ENCODE measurements at regions of chr15 and their contacts with region 1.

Region 1: DNA sequence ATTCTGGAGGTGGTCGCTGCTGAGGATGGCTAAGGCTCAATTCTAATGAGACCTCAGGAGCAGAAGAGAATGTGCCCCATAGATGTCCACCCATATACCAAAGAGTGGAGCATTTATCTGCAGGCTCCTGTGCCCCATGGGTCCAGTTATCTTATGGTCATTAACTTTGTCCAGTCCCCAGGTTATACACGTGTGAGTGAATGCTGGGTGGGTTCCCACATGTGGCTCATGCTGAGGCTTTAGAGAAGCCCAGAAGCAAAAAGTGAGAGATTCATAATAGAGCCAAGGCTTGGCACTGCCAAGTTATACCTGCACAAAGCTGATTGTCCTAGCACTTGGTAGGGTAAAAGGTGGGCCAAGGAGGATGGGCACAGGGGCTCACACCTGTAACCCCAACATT is 30.0 kb upstream of the MINAR1 start:
- DNase-seq: no peak
- ATAC-seq: no peak
- H3K4me3 ChIP-seq: no peak overlapping the region
- H3K27ac ChIP-seq: no peak overlapping the region
- H3K4me1 ChIP-seq: no peaks in the 10 kb centered on the region
- H3K27me3 ChIP-seq: no peaks in the 10 kb centered on the region
- CTCF ChIP-seq: no peak

Region 2: DNA sequence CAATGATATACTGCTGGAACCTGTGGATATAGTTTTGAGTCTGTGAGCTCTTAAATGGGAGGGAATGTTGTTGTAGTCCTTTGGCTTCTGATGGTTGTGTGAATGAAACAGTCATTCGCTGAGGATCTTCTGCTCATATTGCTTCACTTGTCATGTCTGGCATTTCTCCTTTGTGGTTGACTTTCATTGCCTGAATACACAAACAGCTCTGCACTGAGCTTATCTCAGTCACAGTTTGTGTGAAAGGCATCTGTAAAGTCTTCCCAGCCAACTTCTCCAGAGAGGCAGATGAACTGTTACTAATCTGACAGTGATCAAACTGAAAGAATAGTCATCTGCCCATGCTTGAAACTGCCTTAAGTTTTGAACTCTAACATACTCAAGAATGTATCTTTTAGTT is 31.4 kb before region 1 on chr15:
- CTCF ChIA-PET with region 1: no interaction called
- POLR2A ChIA-PET with region 1: no interaction called
- in situ Hi-C with region 1: no loop called
- intact Hi-C with region 1: no loop called
- DNase-seq: no peak
- ATAC-seq: no peak
- H3K4me3 ChIP-seq: no peak overlapping the region
- H3K27ac ChIP-seq: no peak overlapping the region
- H3K4me1 ChIP-seq: no peaks in the 10 kb centered on the region
- H3K27me3 ChIP-seq: no peaks in the 10 kb centered on the region
- CTCF ChIP-seq: no peak

Region 3: GRCh38 chr15:79442911-79443310 is 40.8 kb after region 1 on chr15:
- CTCF ChIA-PET with region 1: no interaction called
- POLR2A ChIA-PET with region 1: interaction called, 10 read pairs
- in situ Hi-C with region 1: no loop called
- intact Hi-C with region 1: no loop called
- DNase-seq: no peak
- ATAC-seq: no peak
- H3K4me3 ChIP-seq: no peak overlapping the region
- H3K27ac ChIP-seq: no peak overlapping the region
- H3K4me1 ChIP-seq: no peaks in the 10 kb centered on the region
- H3K27me3 ChIP-seq: no peaks in the 10 kb centered on the region
- CTCF ChIP-seq: no peak

Region 4: DNA sequence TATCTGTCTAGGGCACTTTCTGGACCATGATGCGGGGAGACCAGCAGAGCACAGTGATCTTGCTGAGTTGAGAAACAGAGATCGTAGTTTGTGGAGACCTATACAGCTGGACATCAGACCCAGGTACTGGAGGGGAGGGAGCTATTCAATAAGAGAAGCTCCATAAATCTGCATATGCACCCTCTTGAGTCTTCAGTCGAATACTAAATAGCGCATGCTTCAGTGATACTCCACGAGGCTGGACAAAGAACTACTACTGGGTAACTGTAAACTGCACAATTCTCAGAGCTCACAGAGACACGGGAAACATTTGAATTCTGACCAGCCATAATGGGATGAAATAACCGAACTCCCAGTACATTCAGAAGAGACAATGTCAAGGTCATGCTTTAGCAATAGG is 79.7 kb after region 1 on chr15:
- CTCF ChIA-PET with region 1: no interaction called
- POLR2A ChIA-PET with region 1: no interaction called
- in situ Hi-C with region 1: no loop called
- intact Hi-C with region 1: no loop called
- DNase-seq: no peak
- ATAC-seq: no peak
- H3K4me3 ChIP-seq: no peak overlapping the region
- H3K27ac ChIP-seq: no peak overlapping the region
- H3K4me1 ChIP-seq: no peaks in the 10 kb centered on the region
- H3K27me3 ChIP-seq: peaks cover 10% of the 10 kb centered on the region
- CTCF ChIP-seq: no peak